CD4-positive, alpha-beta T cell (primary cell): ENCODE measurements at regions of chr2 and their contacts with region 1.

Region 1: GRCh38 chr2:179963626-179964025 is 43.5 kb downstream of the CWC22 start:
- DNase-seq: no peak
- ATAC-seq: no peak
- H3K4me3 ChIP-seq: no peak overlapping the region
- H3K4me3 Mint-ChIP-seq: no peak overlapping the region
- H3K27ac ChIP-seq: no peak overlapping the region
- H3K27ac Mint-ChIP-seq: no peak overlapping the region
- H3K4me1 ChIP-seq: no peaks in the 10 kb centered on the region
- H3K4me1 Mint-ChIP-seq: no peaks in the 10 kb centered on the region
- H3K27me3 ChIP-seq: no peaks in the 10 kb centered on the region
- H3K27me3 Mint-ChIP-seq: no peaks in the 10 kb centered on the region
- CTCF ChIP-seq: no peak

Region 2: DNA sequence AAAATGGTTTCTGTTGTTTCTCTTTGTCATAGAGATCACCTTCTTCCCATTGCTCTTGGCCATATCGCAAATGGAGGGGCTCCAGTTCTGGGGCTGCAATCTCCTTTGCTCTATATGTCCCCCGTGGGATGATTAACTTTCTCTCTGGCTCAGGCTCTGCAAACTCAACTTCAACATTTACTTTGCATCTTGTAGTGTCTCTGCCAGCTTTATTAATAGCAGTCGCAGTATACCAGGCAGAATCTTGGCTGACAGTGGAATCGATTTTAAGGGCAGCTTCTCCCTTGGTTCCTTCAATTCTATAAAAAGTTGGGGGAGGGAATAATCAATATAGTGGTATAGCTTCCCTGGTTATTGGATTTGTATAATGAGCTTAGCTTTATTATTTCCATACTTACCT is 1186.9 kb before region 1 on chr2:
- CTCF ChIA-PET with region 1: no interaction called
- POLR2A ChIA-PET with region 1: no interaction called
- intact Hi-C with region 1: loop called in 1 of 2 experiments (anchors 10 kb)
- DNase-seq: no peak
- ATAC-seq: no peak
- H3K4me3 ChIP-seq: no peak overlapping the region
- H3K4me3 Mint-ChIP-seq: no peak overlapping the region
- H3K27ac ChIP-seq: no peak overlapping the region
- H3K27ac Mint-ChIP-seq: no peak overlapping the region
- H3K4me1 ChIP-seq: no peaks in the 10 kb centered on the region
- H3K4me1 Mint-ChIP-seq: no peaks in the 10 kb centered on the region
- H3K27me3 ChIP-seq: no peaks in the 10 kb centered on the region
- H3K27me3 Mint-ChIP-seq: no peaks in the 10 kb centered on the region
- CTCF ChIP-seq: no peak

Region 3: DNA sequence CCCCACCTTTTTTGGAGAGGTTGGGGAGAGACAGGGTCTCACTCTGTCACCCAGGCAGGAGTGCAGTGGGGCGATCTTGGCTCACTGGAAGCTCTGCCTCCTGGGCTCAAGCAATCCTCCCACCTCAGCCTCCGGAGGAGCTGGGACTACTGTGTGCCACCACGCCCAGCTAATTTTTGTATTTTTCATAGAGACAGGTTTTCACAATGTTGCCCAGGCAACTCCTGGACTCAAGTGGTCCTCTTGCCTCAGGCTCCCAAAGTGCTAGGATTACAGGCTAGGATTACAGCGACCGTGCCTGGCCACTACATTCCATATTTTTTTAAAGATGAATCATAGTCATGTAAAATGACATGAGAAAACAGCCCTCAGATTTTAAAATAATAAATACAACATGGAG is 11.1 kb after region 1 on chr2:
- CTCF ChIA-PET with region 1: no interaction called
- POLR2A ChIA-PET with region 1: no interaction called
- intact Hi-C with region 1: no loop called
- DNase-seq: no peak
- ATAC-seq: no peak
- H3K4me3 ChIP-seq: no peak overlapping the region
- H3K4me3 Mint-ChIP-seq: no peak overlapping the region
- H3K27ac ChIP-seq: no peak overlapping the region
- H3K27ac Mint-ChIP-seq: no peak overlapping the region
- H3K4me1 ChIP-seq: no peaks in the 10 kb centered on the region
- H3K4me1 Mint-ChIP-seq: no peaks in the 10 kb centered on the region
- H3K27me3 ChIP-seq: no peaks in the 10 kb centered on the region
- H3K27me3 Mint-ChIP-seq: no peaks in the 10 kb centered on the region
- CTCF ChIP-seq: no peak

Region 4: GRCh38 chr2:180006781-180007579 is 43.4 kb after region 1 on chr2 and contains the start of gene CWC22:
- CTCF ChIA-PET with region 1: no interaction called
- POLR2A ChIA-PET with region 1: no interaction called
- intact Hi-C with region 1: no loop called
- DNase-seq: peak; percentile 72 to 95 (median 78)
- ATAC-seq: peak; percentile 95
- H3K4me3 ChIP-seq: peak within 1 kb of the TSS; percentile 89
- H3K4me3 Mint-ChIP-seq: peak within 1 kb of the TSS; percentile 96
- H3K27ac ChIP-seq: peak within 1 kb of the TSS; percentile 97 to 98
- H3K27ac Mint-ChIP-seq: peak within 1 kb of the TSS; percentile 99
- H3K4me1 ChIP-seq: peaks cover 15% of the 10 kb centered on the region
- H3K4me1 Mint-ChIP-seq: peaks cover 39% of the 10 kb centered on the region
- H3K27me3 ChIP-seq: no peaks in the 10 kb centered on the region
- H3K27me3 Mint-ChIP-seq: no peaks in the 10 kb centered on the region
- CTCF ChIP-seq: no peak
- total RNA-seq, gene CWC22: 11.8 to 12.0 TPM

Region 5: GRCh38 chr2:180040146-180040925 is 76.7 kb after region 1 on chr2:
- CTCF ChIA-PET with region 1: no interaction called
- POLR2A ChIA-PET with region 1: no interaction called
- intact Hi-C with region 1: no loop called
- DNase-seq: no peak
- ATAC-seq: no peak
- H3K4me3 ChIP-seq: no peak overlapping the region
- H3K4me3 Mint-ChIP-seq: no peak overlapping the region
- H3K27ac ChIP-seq: no peak overlapping the region
- H3K27ac Mint-ChIP-seq: no peak overlapping the region
- H3K4me1 ChIP-seq: no peaks in the 10 kb centered on the region
- H3K4me1 Mint-ChIP-seq: no peaks in the 10 kb centered on the region
- H3K27me3 ChIP-seq: peaks cover 0 to 6% of the 10 kb centered on the region in 2 experiments
- H3K27me3 Mint-ChIP-seq: peaks cover 55% of the 10 kb centered on the region
- CTCF ChIP-seq: no peak